ENCODE measurements at regions of chr3 and their contacts with region 1.

Region 1: GRCh38 chr3:173553635-173554280 is 156.2 kb downstream of the NLGN1 start:
- DNase-seq: peak; percentile 58
- H3K4me3 ChIP-seq: no peak overlapping the region
- H3K27ac ChIP-seq: no peak overlapping the region
- H3K4me1 ChIP-seq: no peaks in the 10 kb centered on the region
- H3K27me3 ChIP-seq: no peaks in the 10 kb centered on the region
- CTCF ChIP-seq: peak; percentile 61 to 65
- POLR2A ChIP-seq: no peak

Region 2: GRCh38 chr3:172808969-172809546 is 744.7 kb before region 1 on chr3:
- CTCF ChIA-PET with region 1: interaction called, 5 read pairs
- POLR2A ChIA-PET with region 1: no interaction called
- dilution Hi-C with region 1: no loop called
- intact Hi-C with region 1: loop called (anchors 5 kb)
- DNase-seq: peak; percentile 63
- H3K4me3 ChIP-seq: no peak overlapping the region
- H3K27ac ChIP-seq: no peak overlapping the region
- H3K4me1 ChIP-seq: no peaks in the 10 kb centered on the region
- H3K27me3 ChIP-seq: no peaks in the 10 kb centered on the region
- CTCF ChIP-seq: peak in 1 of 2 donors; percentile 2
- POLR2A ChIP-seq: no peak

Region 3: GRCh38 chr3:173221010-173221409 is 332.7 kb before region 1 on chr3:
- CTCF ChIA-PET with region 1: interaction called, 11 read pairs
- POLR2A ChIA-PET with region 1: no interaction called
- dilution Hi-C with region 1: no loop called
- intact Hi-C with region 1: loop called (anchors 1 kb)
- DNase-seq: peak; percentile 37
- H3K4me3 ChIP-seq: no peak overlapping the region
- H3K27ac ChIP-seq: no peak overlapping the region
- H3K4me1 ChIP-seq: no peaks in the 10 kb centered on the region
- H3K27me3 ChIP-seq: peaks cover 5 to 8% of the 10 kb centered on the region in 2 experiments
- CTCF ChIP-seq: peak; percentile 25 to 35
- POLR2A ChIP-seq: no peak

Region 4: DNA sequence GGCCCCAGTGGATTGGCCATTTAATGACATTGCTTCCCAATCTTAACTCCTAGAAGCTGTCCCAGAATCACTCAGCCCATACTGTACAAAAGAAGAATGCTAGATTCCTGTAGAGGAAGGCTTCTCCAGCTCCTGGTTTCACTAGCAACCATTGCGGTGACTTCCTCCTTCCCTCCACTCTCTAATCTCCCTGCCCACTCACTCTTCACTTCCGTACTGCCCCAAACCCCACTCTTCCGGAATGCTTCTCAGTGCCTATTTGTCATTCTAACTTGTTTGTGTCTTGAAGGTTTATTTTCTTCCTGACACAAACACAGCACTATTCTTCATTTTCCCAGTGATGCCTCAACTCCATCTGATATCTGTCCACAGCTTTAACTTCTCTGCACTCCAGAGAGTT is 315.7 kb before region 1 on chr3:
- CTCF ChIA-PET with region 1: no interaction called
- POLR2A ChIA-PET with region 1: no interaction called
- dilution Hi-C with region 1: no loop called
- intact Hi-C with region 1: no loop called
- DNase-seq: no peak
- H3K4me3 ChIP-seq: no peak overlapping the region
- H3K27ac ChIP-seq: no peak overlapping the region
- H3K4me1 ChIP-seq: no peaks in the 10 kb centered on the region
- H3K27me3 ChIP-seq: no peaks in the 10 kb centered on the region
- CTCF ChIP-seq: no peak
- POLR2A ChIP-seq: no peak

Region 5: DNA sequence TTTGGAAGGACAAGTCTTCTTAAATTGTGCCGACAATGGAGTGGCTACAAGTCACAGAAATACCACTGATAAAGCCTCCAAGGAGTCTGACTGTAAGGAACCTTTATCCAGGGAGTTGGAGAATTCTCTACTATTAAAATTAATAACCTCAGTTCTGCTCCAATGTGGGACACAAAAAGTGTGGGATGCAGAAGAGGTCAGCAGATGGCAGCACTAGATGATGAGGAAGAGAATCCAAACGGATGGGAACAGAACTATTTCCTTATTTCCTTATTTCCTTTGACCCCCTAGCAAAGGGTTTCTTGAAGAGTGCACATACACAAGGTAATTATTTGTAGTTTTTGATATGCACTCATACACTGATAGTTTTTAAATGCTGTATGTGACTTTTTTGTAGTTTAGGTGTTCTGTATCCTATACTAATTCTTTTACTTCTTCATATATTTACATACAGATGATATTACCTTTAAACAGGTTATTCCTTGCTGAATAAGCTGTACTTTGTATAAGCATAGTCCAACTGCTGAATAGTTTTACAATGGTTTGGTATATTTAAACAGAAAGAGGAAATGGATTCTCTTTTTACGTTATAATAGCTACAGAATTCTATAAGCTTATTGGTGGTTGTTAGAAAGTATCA is 181.8 kb before region 1 on chr3:
- CTCF ChIA-PET with region 1: interaction called, 30 read pairs
- POLR2A ChIA-PET with region 1: no interaction called
- dilution Hi-C with region 1: no loop called
- intact Hi-C with region 1: loop called (anchors 1 kb)
- DNase-seq: peak; percentile 50
- H3K4me3 ChIP-seq: no peak overlapping the region
- H3K27ac ChIP-seq: no peak overlapping the region
- H3K4me1 ChIP-seq: no peaks in the 10 kb centered on the region
- H3K27me3 ChIP-seq: no peaks in the 10 kb centered on the region
- CTCF ChIP-seq: peak; percentile 56 to 57
- POLR2A ChIP-seq: no peak

Region 6: DNA sequence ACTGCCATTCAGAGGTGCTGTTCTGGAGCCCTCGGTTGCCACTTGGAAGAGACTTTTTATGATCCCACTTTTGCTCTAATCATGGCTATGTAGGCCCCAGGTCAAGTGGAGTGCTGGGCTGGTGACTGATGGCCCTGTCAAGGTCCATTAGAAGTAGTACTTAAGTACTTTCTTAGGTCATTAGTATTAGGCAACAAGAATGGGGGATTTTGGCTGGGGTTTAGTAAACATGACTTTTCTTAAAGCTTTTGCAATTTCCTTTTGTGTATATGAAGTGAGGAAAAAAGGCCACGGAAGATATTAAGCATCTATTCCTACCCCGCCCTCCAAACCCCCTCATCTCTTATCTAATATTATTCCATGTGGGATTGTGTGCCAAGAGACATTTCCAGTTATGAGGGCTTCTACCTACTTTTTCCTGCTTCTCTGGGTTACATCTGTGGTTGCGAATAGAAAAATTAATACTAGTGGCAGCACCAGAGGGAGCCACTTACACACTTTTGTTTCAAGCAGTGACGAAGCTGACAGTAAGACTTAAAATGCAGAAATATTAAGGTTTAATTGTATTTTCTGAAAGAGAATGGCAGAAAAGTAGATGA is 142.3 kb before region 1 on chr3:
- CTCF ChIA-PET with region 1: interaction called, 88 read pairs
- POLR2A ChIA-PET with region 1: no interaction called
- dilution Hi-C with region 1: no loop called
- intact Hi-C with region 1: loop called (anchors 1 kb)
- DNase-seq: peak; percentile 80
- H3K4me3 ChIP-seq: no peak overlapping the region
- H3K27ac ChIP-seq: no peak overlapping the region
- H3K4me1 ChIP-seq: no peaks in the 10 kb centered on the region
- H3K27me3 ChIP-seq: no peaks in the 10 kb centered on the region
- CTCF ChIP-seq: peak; percentile 21 to 35
- POLR2A ChIP-seq: no peak

Region 7: GRCh38 chr3:173538410-173538809 is 15.3 kb before region 1 on chr3:
- CTCF ChIA-PET with region 1: interaction called, 12 read pairs
- POLR2A ChIA-PET with region 1: no interaction called
- dilution Hi-C with region 1: no loop called
- intact Hi-C with region 1: no loop called
- DNase-seq: no peak
- H3K4me3 ChIP-seq: no peak overlapping the region
- H3K27ac ChIP-seq: no peak overlapping the region
- H3K4me1 ChIP-seq: no peaks in the 10 kb centered on the region
- H3K27me3 ChIP-seq: no peaks in the 10 kb centered on the region
- CTCF ChIP-seq: no peak
- POLR2A ChIP-seq: no peak

Region 8: DNA sequence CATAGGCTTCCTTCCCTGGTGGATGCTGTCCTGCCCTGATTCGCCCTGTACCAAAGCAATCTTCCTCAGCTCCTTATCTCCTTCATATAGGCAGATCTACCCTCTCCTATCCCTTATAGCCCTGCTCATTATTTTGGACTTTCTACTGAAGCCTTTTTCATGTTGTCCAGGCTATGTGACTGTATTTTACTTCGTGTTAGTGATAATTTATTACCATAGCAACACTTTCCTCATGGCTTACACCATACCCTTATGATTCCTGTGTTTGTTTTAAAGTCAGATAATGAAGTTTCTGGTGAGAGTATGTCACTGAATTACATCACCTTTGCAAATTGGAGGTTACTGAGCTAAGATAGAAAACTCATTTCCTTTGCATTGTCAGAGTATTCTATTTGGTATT is 196.3 kb after region 1 on chr3:
- CTCF ChIA-PET with region 1: no interaction called
- POLR2A ChIA-PET with region 1: no interaction called
- dilution Hi-C with region 1: no loop called
- intact Hi-C with region 1: no loop called
- DNase-seq: peak; percentile 75
- H3K4me3 ChIP-seq: no peak overlapping the region
- H3K27ac ChIP-seq: peak overlapping the region; percentile 99
- H3K4me1 ChIP-seq: peaks cover 57% of the 10 kb centered on the region
- H3K27me3 ChIP-seq: no peaks in the 10 kb centered on the region
- CTCF ChIP-seq: no peak
- POLR2A ChIP-seq: no peak

Measured in endothelial cell of umbilical vein (primary cell).